Activated CD4-positive, alpha-beta memory T cell treated with anti-CD3 and anti-CD28 coated beads for 36 hours (primary cell): ENCODE measurements at regions of chr22 and their contacts with region 1.

Region 1: GRCh38 chr22:25564320-25564978 is at the start of gene GRK3:
- DNase-seq: peak; percentile 71
- H3K4me3 Mint-ChIP-seq: peak within 1 kb of the TSS; percentile 85
- H3K27ac Mint-ChIP-seq: no peak within 1 kb of the TSS
- H3K4me1 Mint-ChIP-seq: peaks cover 32% of the 10 kb centered on the region
- H3K27me3 Mint-ChIP-seq: peaks cover 16% of the 10 kb centered on the region
- total RNA-seq, gene GRK3: 7.5 to 8.6 TPM

Region 2: GRCh38 chr22:25488244-25489020 is 76.0 kb before region 1 on chr22:
- CTCF ChIA-PET with region 1: no interaction called
- POLR2A ChIA-PET with region 1: no interaction called
- intact Hi-C with region 1: loop called (anchors 10 kb)
- DNase-seq: peak; percentile 75
- H3K4me3 Mint-ChIP-seq: no peak overlapping the region
- H3K27ac Mint-ChIP-seq: no peak overlapping the region
- H3K4me1 Mint-ChIP-seq: peaks cover 43% of the 10 kb centered on the region
- H3K27me3 Mint-ChIP-seq: no peaks in the 10 kb centered on the region

Region 3: DNA sequence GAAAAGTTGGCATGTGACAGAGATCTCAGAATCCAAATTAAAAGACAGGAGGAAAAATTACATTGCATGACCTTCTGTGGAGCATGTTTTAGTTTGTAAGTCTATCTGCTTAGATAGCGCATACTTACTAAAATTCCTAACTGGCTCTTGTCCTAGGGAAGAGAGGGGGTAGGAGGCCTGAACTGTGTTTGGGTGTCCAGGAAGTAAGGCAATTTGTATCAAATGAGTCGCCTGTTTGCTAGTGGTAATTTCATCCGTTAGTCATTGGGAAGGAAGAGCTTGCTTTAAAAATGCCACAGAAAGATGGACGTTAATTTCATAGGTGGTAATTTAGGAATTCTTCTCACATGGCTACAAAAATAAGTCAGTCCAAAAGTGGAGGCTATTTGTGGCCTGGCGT is 18.5 kb after region 1 on chr22:
- CTCF ChIA-PET with region 1: no interaction called
- POLR2A ChIA-PET with region 1: no interaction called
- intact Hi-C with region 1: no loop called
- DNase-seq: no peak
- H3K4me3 Mint-ChIP-seq: no peak overlapping the region
- H3K27ac Mint-ChIP-seq: no peak overlapping the region
- H3K4me1 Mint-ChIP-seq: no peaks in the 10 kb centered on the region
- H3K27me3 Mint-ChIP-seq: no peaks in the 10 kb centered on the region

Region 4: DNA sequence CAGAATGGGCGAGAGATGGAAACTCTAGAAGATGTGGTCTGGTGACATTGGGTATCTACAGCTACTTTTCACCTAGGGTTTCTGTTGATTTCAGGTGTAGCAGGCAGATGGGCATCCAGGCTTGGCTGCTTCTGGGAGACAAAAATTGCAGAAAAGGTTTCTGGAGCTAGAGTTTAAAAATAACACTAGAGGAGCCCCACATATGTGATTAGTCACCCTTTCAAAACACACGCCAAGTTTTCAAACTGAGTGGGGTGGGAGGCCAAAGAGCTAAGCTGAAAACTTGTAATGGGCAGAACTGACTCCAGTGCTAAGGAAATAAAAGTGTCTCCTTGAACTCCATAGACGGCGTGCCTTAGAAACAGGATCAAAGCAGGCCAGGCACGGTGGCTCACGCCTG is 80.8 kb after region 1 on chr22:
- CTCF ChIA-PET with region 1: no interaction called
- POLR2A ChIA-PET with region 1: no interaction called
- intact Hi-C with region 1: no loop called
- DNase-seq: no peak
- H3K4me3 Mint-ChIP-seq: no peak overlapping the region
- H3K27ac Mint-ChIP-seq: no peak overlapping the region
- H3K4me1 Mint-ChIP-seq: no peaks in the 10 kb centered on the region
- H3K27me3 Mint-ChIP-seq: no peaks in the 10 kb centered on the region

Region 5: GRCh38 chr22:25702040-25702439 is 137.6 kb after region 1 on chr22:
- CTCF ChIA-PET with region 1: no interaction called
- POLR2A ChIA-PET with region 1: no interaction called
- intact Hi-C with region 1: loop called (anchors 2 kb)
- DNase-seq: no peak
- H3K4me3 Mint-ChIP-seq: no peak overlapping the region
- H3K27ac Mint-ChIP-seq: no peak overlapping the region
- H3K4me1 Mint-ChIP-seq: peaks cover 13% of the 10 kb centered on the region
- H3K27me3 Mint-ChIP-seq: no peaks in the 10 kb centered on the region

Region 6: DNA sequence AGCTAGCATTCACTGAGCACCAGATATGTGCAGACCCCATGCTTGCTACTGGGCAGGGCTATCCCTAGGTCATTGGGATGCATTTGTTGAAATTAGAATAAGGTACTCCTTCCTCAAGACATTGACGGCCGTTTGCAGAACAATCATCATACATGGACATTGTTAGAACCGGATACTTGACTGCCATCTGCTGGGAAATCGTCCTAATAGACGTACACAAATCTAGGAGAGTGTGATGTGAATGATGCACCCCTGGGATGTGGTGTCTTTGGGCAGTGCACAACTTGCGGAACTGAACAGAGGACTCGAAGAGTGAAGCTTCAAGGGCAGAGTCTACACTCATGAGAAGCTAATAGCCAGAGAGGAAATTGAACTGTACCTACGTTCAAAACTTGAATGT is 213.4 kb after region 1 on chr22:
- CTCF ChIA-PET with region 1: interaction called, 5 read pairs
- POLR2A ChIA-PET with region 1: no interaction called
- intact Hi-C with region 1: loop called (anchors 5 kb)
- DNase-seq: peak; percentile 16
- H3K4me3 Mint-ChIP-seq: no peak overlapping the region
- H3K27ac Mint-ChIP-seq: no peak overlapping the region
- H3K4me1 Mint-ChIP-seq: peaks cover 3% of the 10 kb centered on the region
- H3K27me3 Mint-ChIP-seq: peaks cover 3% of the 10 kb centered on the region

Region 7: GRCh38 chr22:26291940-26292666 is 727.7 kb after region 1 on chr22:
- CTCF ChIA-PET with region 1: no interaction called
- POLR2A ChIA-PET with region 1: no interaction called
- intact Hi-C with region 1: loop called (anchors 5 kb)
- DNase-seq: no peak
- H3K4me3 Mint-ChIP-seq: no peak overlapping the region
- H3K27ac Mint-ChIP-seq: no peak overlapping the region
- H3K4me1 Mint-ChIP-seq: peaks cover 14% of the 10 kb centered on the region
- H3K27me3 Mint-ChIP-seq: no peaks in the 10 kb centered on the region